HEK293T (cell line): ENCODE measurements at regions of chr5 and their contacts with region 1.

Region 1: DNA sequence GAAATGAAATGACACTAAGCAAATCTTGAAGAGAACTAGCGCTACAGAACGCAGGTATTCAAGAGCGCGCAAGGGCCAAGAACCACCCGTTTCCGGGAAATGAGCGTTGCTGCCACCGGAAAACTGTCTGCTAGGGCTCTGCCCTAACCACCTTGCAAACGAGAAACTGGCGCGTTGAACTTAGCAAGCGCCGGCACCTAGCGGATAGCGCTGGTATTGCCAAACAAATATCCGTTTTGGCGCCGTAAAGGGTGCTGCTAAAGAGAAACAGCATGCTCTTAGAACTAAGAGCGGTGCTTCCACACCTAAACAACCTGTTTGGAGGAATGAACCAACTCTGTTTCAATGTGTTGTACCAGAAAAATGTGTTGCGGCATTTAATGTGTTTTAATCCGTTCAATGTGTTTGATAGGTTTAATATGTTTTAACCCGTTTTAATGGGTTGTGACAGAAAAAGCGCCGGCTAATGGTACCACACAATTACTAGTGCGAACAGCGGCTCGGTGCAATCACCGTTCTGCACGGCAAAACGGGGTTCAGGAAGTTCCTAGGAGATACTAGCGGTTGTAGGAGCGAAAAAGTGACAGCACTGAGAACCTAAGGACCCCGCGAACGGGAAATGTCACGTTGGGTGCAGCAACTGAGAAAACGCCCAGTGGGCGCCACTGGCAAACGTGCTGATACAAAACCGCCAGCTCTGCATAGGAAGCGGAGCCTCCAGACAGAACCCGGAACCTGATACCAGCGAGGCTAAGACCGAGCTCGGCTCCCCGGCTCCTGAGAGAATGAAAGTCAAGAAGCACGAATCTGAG is at the start of gene ANXA2R:
- DNase-seq: peak; percentile 45

Region 2: DNA sequence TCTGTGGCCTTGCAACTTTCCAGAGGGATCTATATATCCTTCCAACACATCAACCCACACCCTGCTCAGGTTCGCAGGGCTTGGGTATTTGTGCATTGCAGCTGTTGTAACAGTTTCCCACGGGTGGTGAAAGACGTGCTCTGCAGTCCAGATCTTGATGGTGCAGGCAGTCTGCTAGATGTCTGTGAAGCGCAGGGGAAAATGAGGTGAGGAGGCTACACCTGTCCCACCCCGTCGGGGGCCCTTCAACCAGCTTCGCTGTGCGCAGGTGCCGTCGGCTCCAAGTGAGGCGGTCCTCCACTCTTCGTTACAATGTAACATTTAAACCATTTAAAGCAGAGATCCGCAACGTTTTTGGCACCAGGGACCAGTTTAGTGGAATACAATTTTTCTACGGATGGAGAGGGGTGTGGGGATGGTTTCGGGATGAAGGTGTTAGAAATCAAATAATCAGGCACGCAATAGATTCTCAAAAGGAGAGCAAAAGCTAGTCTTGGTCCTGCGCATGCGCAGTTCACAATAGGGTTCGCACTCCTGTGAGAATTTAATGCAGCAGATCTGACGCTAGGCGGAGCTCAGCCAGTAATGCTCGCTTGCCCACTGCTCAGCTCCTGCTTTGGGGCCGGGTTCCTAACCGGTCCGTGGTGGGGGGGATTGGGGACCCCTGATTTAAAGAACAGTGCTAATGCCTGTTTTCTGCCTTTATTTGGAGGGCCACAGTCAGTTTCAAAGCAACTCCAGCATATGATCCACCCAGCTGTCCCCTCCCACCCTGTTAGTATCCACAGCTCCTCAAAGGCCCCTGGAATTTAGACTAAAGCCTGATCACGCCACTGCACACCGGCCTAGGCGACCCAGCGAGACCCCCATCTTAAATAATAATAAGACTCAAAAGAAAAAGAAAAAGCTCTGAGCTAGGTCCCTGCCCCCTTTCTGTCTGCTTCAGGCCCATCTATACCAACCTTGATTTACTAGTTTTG is 131.7 kb before region 1 on chr5:
- CTCF ChIA-PET with region 1: interaction called, 13 read pairs
- POLR2A ChIA-PET with region 1: interaction called, 15 read pairs
- DNase-seq: peak; percentile 76

Region 3: DNA sequence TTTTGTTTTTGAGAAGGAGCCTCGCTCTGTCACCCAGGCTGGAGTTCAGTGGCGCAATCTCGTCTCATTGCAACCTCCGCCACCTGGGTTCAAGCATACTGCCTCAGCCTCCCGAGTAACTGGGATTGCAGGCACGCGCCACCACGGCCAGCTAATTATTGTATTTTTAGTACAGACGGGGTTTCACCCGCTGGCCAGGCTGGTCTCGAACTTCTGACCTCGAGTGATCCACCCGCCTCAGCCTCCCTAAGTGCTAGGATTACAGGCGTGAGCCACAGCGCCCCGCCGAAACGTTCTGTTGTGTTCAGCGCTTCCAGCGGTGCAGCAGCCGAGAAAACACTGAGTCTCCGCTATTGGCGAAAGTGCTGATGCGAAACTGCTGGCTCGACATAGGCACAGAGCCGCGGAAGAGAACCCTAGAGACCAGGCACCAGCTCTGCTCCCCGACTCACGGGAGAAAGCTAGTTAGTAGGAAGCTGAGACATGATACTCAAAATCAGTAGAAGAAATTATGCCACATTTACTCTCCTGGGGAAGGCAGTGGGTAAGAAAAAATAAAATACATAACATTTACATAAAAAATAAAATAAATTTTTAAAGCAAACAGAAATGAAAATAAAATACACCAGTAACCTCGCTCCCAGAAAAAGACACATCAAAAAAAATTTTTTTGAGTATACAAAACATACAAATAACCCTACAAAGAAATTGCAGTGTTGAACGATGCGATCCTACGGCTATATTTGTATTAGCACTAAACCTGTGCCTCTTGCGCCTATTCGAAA is 31.9 kb before region 1 on chr5:
- CTCF ChIA-PET with region 1: interaction called, 3 read pairs
- POLR2A ChIA-PET with region 1: interaction called, 17 read pairs
- DNase-seq: no peak

Region 4: DNA sequence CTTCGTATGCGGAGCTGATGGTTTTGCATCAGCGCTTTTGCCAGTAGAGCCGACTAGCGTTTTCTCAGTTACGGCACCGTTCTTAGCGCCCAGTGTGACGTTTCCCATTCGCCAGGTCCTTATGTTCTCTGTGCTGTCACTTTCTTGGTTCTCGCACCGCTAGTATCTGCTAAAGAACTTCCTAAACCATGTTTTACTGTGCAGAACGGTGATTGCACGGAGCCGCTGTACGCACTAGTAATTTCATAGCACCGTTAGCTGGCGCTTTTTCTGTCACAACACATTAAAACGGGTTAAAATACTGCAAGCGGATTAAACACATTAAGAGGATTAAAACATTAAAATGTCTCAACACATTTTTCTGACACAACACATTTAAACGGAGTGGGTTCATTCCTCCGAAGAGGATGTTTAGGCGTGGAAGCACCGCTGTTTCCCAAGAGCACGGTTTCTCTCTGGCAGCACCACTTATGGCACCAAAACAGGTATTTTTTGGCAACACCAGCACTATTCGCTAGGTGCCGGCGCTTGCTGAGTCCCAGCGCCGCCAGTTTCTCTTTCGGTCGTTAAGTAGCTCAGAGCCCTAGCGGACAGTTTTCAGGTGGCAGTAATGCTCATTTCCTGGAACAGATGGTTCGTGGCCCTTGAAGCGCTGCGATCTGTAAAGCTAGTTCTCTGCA is 20.7 kb before region 1 on chr5:
- CTCF ChIA-PET with region 1: interaction called, 31 read pairs
- POLR2A ChIA-PET with region 1: interaction called, 42 read pairs
- DNase-seq: no peak

Region 5: GRCh38 chr5:43061352-43062075 is 21.0 kb after region 1 on chr5:
- CTCF ChIA-PET with region 1: interaction called, 4 read pairs
- POLR2A ChIA-PET with region 1: interaction called, 55 read pairs
- DNase-seq: no peak

Region 6: DNA sequence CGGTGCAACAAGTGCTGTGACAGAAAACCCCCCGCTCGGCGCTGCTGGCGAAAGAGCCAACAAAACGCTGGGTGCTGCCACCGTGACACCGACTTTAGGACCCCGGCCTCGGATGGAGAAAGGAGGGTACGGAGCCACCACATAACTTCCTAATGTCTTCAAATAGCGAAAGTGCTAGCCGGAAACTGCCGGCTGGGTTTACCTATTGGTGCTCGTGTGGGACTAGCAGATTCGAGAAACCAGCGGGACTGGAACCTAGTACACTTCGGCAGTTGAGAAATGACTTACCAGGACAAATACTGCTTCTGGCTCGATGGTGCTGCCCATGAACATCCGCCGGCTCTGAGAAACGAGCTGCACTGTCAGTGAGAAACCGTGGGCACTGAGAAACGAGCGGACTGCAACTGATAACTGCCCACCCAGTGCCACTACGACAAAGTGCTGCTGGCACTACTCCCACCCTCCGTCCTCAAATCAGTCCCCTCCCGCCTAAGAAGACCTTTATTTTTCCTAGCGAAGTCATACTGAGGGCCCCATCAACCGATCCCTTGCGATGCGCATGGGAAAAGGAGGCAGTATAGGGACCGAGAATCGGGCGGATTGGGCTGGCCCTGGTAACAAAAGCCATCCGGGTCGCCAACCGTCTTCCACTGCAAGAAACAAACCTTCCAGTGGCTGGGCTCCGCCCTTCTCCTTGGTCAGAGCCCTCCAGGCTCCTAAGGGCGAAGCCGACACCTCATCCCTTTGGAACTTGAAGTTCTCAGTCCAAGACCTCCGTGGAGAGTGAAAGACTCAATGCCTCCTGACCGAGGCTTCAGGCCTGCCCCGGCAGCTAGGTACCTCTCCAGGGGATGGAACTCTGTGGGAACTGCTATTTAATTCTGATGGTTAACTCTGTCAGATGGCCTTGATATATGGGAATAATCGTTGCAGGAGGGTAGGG is 26.6 kb after region 1 on chr5:
- CTCF ChIA-PET with region 1: interaction called, 4 read pairs
- POLR2A ChIA-PET with region 1: interaction called, 55 read pairs
- DNase-seq: peak; percentile 41